Activated CD8-positive, alpha-beta T cell treated with anti-CD3 and anti-CD28 coated beads for 36 hours (primary cell): ENCODE measurements at regions of chr1 and their contacts with region 1.

Region 1: GRCh38 chr1:37989361-37989930 is 376 bp downstream of the SF3A3 start:
- DNase-seq: peak; percentile 54
- ATAC-seq: peak; percentile 31
- H3K4me3 Mint-ChIP-seq: peak overlapping the region; percentile 92
- H3K27ac Mint-ChIP-seq: peak overlapping the region; percentile 94
- H3K4me1 Mint-ChIP-seq: peaks cover 19% of the 10 kb centered on the region
- H3K27me3 Mint-ChIP-seq: no peaks in the 10 kb centered on the region
- CTCF ChIP-seq: no peak

Region 2: DNA sequence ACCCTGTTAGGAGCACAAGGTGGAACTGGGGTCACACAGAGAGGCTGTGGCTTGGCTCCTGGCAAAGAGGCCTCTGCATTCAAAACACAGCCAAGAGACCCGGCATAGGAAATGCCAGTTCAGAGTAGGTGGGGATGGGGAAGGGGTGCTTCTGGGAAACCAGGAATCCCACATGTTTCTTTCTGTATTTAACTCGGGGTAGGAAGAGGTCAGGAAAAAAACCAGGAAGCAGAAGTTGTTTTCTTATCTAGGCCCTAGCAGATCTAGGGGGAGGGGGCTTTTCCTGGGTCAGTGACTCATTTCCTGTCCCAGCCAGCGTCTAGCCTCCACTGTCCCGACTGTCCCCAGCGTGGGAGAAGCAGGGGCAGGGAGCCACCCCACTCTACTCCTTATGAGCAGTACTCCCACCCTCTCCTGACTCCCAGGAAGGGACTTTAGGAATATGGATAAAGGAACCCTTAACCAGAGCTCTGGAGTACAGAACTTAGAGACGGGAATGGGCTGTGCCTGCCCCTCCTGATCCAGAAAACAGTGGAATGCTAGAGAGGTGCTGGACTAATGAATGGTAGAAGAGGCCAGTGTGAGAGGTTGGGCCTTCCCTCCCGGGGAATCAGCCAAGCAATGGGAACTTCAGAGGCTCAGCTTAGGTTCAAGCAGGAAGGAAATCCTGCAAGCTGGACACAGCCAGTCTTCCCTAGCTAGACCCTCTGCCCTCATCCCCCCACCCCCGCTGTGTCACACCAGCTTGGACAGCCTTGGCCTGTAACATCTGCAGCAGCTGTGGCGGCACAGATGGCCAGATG is 10.2 kb after region 1 on chr1:
- CTCF ChIA-PET with region 1: interaction called, 29 read pairs
- POLR2A ChIA-PET with region 1: interaction called, 11 read pairs
- intact Hi-C with region 1: no loop called
- DNase-seq: peak; percentile 39
- ATAC-seq: peak; percentile 17
- H3K4me3 Mint-ChIP-seq: peak overlapping the region; percentile 60
- H3K27ac Mint-ChIP-seq: peak overlapping the region; percentile 92
- H3K4me1 Mint-ChIP-seq: peaks cover 67% of the 10 kb centered on the region
- H3K27me3 Mint-ChIP-seq: no peaks in the 10 kb centered on the region
- CTCF ChIP-seq: no peak

Region 3: GRCh38 chr1:38018864-38019343 is 29.5 kb after region 1 on chr1:
- CTCF ChIA-PET with region 1: interaction called, 99 read pairs
- POLR2A ChIA-PET with region 1: interaction called, 114 read pairs
- intact Hi-C with region 1: loop called (anchors 2 kb)
- DNase-seq: no peak
- ATAC-seq: peak; percentile 79
- H3K4me3 Mint-ChIP-seq: no peak overlapping the region
- H3K27ac Mint-ChIP-seq: no peak overlapping the region
- H3K4me1 Mint-ChIP-seq: peaks cover 29% of the 10 kb centered on the region
- H3K27me3 Mint-ChIP-seq: no peaks in the 10 kb centered on the region
- CTCF ChIP-seq: peak; percentile 41